PC-9 (cell line): ENCODE measurements at regions of chr11 and their contacts with region 1.

Region 1: GRCh38 chr11:108524434-108524833 is 26.2 kb upstream of the POGLUT3 start:
- DNase-seq: peak in 1 of 2 experiments; percentile 64
- H3K4me3 ChIP-seq: no peak overlapping the region
- H3K27ac ChIP-seq: no peak overlapping the region
- H3K4me1 ChIP-seq: 0 out of 2 replicates have a peak, but pooled peaks cover 9% of the 10 kb centered on the region
- H3K27me3 ChIP-seq: no peaks in the 10 kb centered on the region
- CTCF ChIP-seq: no peak

Region 2: DNA sequence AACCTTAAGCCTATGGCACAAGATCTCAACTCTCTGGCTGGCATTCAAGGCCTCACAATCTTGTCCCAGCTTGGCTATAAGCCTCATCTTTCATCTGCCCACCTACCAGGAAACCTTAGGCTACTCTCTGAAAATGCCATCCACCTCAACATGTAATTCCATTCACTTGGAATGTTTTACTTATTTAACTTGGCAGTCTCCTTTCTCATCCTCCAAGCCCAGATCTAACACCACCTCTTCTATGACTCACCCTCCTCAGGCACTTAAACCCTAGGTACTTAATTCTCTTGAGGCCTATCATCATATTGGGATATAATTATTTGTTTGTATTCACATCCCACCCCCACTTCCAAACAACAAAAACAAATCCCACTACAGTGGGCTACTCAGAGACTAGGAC is 41.3 kb before region 1 on chr11:
- CTCF ChIA-PET with region 1: interaction called, 19 read pairs
- POLR2A ChIA-PET with region 1: no interaction called
- intact Hi-C with region 1: no loop called
- DNase-seq: no peak
- H3K4me3 ChIP-seq: no peak overlapping the region
- H3K27ac ChIP-seq: no peak overlapping the region
- H3K4me1 ChIP-seq: no peaks in the 10 kb centered on the region
- H3K27me3 ChIP-seq: no peaks in the 10 kb centered on the region
- CTCF ChIP-seq: no peak